ENCODE measurements at regions of chr1 and their contacts with region 1.

Region 1: GRCh38 chr1:8560611-8561544 is 243.0 kb downstream of the SLC45A1 start:
- DNase-seq: no peak
- ATAC-seq: peak; percentile 79
- H3K4me3 ChIP-seq: no peak overlapping the region
- H3K27ac ChIP-seq: no peak overlapping the region
- H3K4me1 ChIP-seq: no peaks in the 10 kb centered on the region
- H3K27me3 ChIP-seq: no peaks in the 10 kb centered on the region

Region 2: GRCh38 chr1:7975212-7975865 is 585.5 kb before region 1 on chr1:
- intact Hi-C with region 1: loop called in 1 of 2 experiments (anchors 10 kb)
- DNase-seq: peak; percentile 66 to 85
- ATAC-seq: peak; percentile 91
- H3K4me3 ChIP-seq: no peak overlapping the region
- H3K27ac ChIP-seq: no peak overlapping the region
- H3K4me1 ChIP-seq: no peaks in the 10 kb centered on the region
- H3K27me3 ChIP-seq: no peaks in the 10 kb centered on the region

Region 3: DNA sequence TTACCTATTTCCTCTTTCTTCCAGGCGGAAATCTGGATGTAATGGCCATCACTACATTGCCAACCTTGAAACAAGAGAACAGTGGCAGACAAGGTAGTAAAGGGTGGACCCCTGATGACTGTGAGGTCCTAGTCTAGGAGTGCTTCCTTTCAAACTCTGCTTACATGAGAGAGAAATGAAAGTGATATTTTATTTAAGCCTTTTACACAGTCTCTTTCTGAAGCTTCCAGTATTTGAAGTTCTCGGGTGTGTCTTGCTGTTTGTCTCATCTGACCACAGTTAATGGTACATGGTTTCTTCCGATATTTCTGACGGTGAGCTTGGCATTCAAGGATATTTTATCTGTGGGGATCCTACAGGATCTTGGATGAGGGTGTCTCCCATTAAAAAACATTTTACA is 27.8 kb before region 1 on chr1:
- intact Hi-C with region 1: no loop called
- DNase-seq: no peak
- ATAC-seq: no peak
- H3K4me3 ChIP-seq: no peak overlapping the region
- H3K27ac ChIP-seq: no peak overlapping the region
- H3K4me1 ChIP-seq: no peaks in the 10 kb centered on the region
- H3K27me3 ChIP-seq: no peaks in the 10 kb centered on the region

Region 4: GRCh38 chr1:8671306-8671917 is 110.5 kb after region 1 on chr1:
- intact Hi-C with region 1: loop called (anchors 1 to 5 kb)
- DNase-seq: no peak
- ATAC-seq: peak; percentile 88
- H3K4me3 ChIP-seq: no peak overlapping the region
- H3K27ac ChIP-seq: no peak overlapping the region
- H3K4me1 ChIP-seq: peaks cover 7 to 15% of the 10 kb centered on the region in 2 donors
- H3K27me3 ChIP-seq: no peaks in the 10 kb centered on the region

Region 5: DNA sequence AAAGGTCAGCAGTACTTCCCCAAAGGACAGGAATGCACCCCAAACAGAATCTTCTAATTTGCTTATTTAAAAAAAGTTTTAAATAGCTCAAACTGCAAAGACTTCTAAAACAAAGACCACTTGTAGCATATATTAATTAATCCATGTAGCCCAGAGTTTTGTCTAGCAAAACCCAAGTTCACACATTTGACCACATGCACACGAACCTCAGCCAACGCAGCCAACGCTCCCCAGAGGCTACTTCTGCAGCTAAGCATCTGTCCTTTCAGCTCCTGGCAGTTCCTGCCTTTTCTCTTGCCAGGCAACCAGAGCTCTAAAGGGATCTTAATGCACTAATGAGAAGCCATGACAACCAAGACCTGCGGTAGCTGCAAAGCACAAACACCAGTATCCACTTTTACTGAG is 166.9 kb after region 1 on chr1:
- intact Hi-C with region 1: loop called (anchors 2 to 5 kb)
- DNase-seq: no peak
- ATAC-seq: no peak
- H3K4me3 ChIP-seq: no peak overlapping the region
- H3K27ac ChIP-seq: no peak overlapping the region
- H3K4me1 ChIP-seq: no peaks in the 10 kb centered on the region
- H3K27me3 ChIP-seq: no peaks in the 10 kb centered on the region